Psoas muscle (tissue), 8 donors: ENCODE measurements at regions of chr7 and their contacts with region 1.

Region 1: GRCh38 chr7:7182156-7183060 is at the start of gene C1GALT1:
- DNase-seq: peak; percentile 98 to 99
- ATAC-seq: peak; percentile 95 to 98 (median 98)
- H3K4me3 ChIP-seq: peak within 1 kb of the TSS; percentile 94
- H3K27ac ChIP-seq: peak within 1 kb of the TSS; percentile 96
- H3K4me1 ChIP-seq: peaks cover 19% of the 10 kb centered on the region
- H3K27me3 ChIP-seq: no peaks in the 10 kb centered on the region
- CTCF ChIP-seq: peak; percentile 25
- total RNA-seq, gene C1GALT1: 12.5 to 23.3 (median 15.2) TPM

Region 2: DNA sequence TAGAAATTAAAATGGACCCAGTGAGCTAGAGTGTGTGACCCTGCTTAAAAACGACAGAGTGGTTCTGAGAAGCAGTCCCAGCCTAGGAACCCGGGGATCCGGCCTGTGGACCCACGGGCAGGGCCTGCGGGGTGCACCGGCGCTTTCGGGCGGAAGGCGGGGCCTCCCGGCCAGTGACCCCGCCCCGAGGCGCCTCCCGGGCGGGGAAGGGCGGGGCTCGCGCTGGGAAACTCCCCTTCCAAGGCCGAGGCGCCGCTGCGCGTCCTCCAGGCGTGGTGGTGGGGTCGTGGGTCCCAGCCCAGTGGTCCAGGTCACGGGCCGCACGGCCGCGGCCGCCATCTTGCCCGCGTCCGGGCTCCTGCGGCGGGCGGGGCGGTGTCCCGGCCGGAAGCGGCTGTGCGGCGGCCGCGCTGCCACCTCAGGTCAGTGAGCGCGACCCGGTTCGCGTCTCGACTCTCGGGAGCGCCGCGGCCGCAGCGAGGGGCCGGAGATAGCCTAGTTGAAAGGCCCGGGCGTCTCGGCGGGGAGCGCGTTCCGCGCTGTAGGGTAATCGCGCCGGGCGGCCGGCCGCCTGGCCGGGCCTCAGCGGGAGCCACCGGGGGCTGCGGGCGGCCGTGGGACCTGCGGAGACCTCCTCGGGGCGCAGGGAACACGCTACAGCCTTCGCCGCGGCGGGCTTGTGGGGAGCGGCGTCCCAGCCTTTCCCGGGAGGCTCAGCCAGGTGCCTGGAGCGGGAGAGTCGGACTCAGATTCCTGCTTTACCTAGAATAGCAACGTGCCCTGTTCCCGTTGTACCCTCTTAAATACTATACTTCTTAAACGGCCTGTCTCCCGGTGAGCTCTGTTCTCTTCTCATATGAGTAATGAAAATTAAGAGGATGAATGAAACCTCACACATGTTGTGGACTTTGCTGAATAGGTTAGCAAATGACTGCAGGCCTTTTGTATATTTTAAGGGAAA is 384.5 kb after region 1 on chr7 and contains the start of gene MIOS:
- intact Hi-C with region 1: loop called in 1 of 2 experiments (anchors 10 kb)
- DNase-seq: peak; percentile 91 to 95
- ATAC-seq: peak; percentile 89 to 94 (median 91)
- H3K4me3 ChIP-seq: peak within 1 kb of the TSS; percentile 92
- H3K27ac ChIP-seq: peak within 1 kb of the TSS; percentile 97
- H3K4me1 ChIP-seq: peaks cover 39% of the 10 kb centered on the region
- H3K27me3 ChIP-seq: no peaks in the 10 kb centered on the region
- CTCF ChIP-seq: no peak
- total RNA-seq, gene MIOS: 65.5 to 219 (median 105) TPM